ENCODE measurements at regions of chrX and their contacts with region 1.

Region 1: DNA sequence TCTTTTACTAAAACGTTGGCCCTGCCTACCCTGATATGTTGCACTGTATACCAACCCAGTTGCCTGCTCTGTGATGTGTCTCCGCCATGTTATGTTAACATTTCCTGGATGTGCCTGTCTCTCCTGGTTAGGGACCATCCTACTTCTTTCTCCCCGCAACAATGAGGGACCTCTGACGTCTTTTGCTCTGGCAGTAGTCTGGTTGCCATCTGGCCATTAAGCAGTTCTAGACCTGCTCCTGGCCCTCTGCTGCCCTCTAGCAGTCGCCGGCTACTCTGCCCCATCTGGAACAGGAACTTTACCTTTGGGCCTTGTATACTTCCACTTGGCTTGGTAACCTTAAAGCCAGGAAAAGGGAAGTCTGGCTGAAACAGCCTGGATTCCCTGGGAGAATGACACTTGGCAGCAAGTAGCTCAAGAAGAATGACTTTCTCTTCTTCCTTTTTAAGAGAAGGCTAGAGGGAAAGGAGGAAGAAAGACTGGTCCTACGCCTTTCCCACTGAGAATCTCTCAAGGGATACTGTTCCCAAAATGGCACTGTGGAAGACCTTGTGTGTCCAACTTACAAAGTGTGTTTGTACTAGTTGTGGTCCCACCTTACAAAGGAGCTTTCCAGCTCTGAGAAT is 63.5 kb downstream of the GPC3 start:
- DNase-seq: peak; percentile 62
- ATAC-seq: peak; percentile 56
- H3K4me3 Mint-ChIP-seq: no peak overlapping the region
- H3K27ac Mint-ChIP-seq: no peak overlapping the region
- H3K4me1 Mint-ChIP-seq: peaks cover 18% of the 10 kb centered on the region
- H3K27me3 Mint-ChIP-seq: no peaks in the 10 kb centered on the region

Region 2: DNA sequence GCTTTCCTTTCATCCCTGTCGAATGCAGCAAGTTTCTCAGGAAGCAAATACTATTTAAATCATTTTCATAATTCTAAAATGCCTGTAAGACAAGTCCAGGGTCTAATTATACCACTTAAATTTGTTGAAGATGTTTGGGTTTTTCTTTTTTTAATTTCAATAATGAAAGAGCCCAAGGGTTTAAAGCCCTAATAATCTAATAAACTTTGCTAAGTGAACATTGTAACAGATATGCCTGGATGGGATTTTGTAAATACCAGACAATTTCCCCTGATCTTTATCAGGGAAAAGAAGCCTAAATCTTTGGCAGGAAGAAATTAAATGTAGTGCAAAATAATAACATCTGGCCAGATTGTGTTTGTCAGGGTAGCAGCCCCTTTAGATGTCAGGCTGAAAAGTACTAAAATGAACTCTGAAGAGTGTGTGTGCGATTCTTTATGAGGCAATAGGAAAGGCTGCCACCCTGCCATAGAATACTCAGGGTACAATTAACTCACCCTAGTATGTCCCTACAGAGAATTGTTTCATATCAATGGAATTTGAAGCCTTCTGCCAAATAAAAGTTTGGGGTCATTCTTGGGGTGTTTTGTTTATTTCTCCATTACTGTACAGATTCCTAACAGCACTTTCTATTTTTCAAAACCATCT is 17.9 kb after region 1 on chrX:
- CTCF ChIA-PET with region 1: no interaction called
- POLR2A ChIA-PET with region 1: no interaction called
- intact Hi-C with region 1: no loop called
- DNase-seq: no peak
- ATAC-seq: no peak
- H3K4me3 Mint-ChIP-seq: no peak overlapping the region
- H3K27ac Mint-ChIP-seq: no peak overlapping the region
- H3K4me1 Mint-ChIP-seq: no peaks in the 10 kb centered on the region
- H3K27me3 Mint-ChIP-seq: no peaks in the 10 kb centered on the region

Region 3: GRCh38 chrX:133985164-133985966 is 63.5 kb after region 1 on chrX and contains the start of gene GPC3:
- CTCF ChIA-PET with region 1: no interaction called
- POLR2A ChIA-PET with region 1: no interaction called
- intact Hi-C with region 1: loop called in 1 of 2 experiments (anchors 2 kb)
- DNase-seq: peak; percentile 58
- ATAC-seq: peak; percentile 84
- H3K4me3 Mint-ChIP-seq: peak within 1 kb of the TSS; percentile 57
- H3K27ac Mint-ChIP-seq: no peak within 1 kb of the TSS
- H3K4me1 Mint-ChIP-seq: peaks cover 2% of the 10 kb centered on the region
- H3K27me3 Mint-ChIP-seq: peaks cover 24% of the 10 kb centered on the region
- total RNA-seq, gene GPC3: 0.86 to 1.3 TPM

Region 4: GRCh38 chrX:134000260-134001245 is 78.7 kb after region 1 on chrX:
- CTCF ChIA-PET with region 1: no interaction called
- POLR2A ChIA-PET with region 1: no interaction called
- intact Hi-C with region 1: no loop called
- DNase-seq: no peak
- ATAC-seq: no peak
- H3K4me3 Mint-ChIP-seq: no peak overlapping the region
- H3K27ac Mint-ChIP-seq: no peak overlapping the region
- H3K4me1 Mint-ChIP-seq: peaks cover 3% of the 10 kb centered on the region
- H3K27me3 Mint-ChIP-seq: peaks cover 2% of the 10 kb centered on the region

Region 5: GRCh38 chrX:134013092-134013497 is 91.2 kb after region 1 on chrX:
- CTCF ChIA-PET with region 1: no interaction called
- POLR2A ChIA-PET with region 1: no interaction called
- intact Hi-C with region 1: loop called in 1 of 2 experiments (anchors 2 kb)
- DNase-seq: peak; percentile 6
- ATAC-seq: peak; percentile 95
- H3K4me3 Mint-ChIP-seq: no peak overlapping the region
- H3K27ac Mint-ChIP-seq: no peak overlapping the region
- H3K4me1 Mint-ChIP-seq: peaks cover 14% of the 10 kb centered on the region
- H3K27me3 Mint-ChIP-seq: peaks cover 2% of the 10 kb centered on the region

Region 6: DNA sequence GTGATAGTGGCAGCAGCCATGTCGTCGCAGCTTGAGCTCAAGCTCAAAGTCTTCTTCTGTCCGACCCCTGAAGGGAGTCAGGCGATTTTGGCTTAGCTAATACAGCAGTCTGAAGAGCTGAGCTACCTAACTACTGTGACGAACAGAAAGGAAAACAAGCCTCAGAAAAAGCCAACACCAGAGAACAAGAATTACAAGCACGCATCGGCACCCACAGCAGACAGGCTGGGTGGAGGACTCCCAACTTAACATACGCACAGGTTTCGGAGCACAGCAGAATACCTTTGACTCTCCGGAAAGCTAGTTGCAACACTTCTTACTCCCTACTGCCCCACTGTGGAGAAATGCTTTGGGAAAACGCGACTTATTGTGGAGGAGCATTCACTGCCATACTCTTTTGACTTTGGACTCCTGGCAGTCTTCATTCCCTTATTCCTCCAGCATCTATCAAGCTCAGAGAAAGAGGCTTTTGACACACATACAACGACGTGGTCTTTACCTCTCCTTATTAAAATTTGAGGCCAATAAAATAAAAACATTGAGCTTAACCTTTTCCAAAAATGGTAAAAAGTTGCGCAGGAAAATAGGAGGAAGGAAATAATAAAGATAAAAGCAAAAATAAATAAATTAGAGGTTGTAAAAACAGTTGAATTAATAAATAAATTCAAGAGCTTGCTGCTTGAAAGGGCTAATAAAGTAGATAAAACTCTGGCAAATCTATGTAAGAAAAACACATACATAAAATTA is 104.9 kb after region 1 on chrX:
- CTCF ChIA-PET with region 1: interaction called, 4 read pairs
- POLR2A ChIA-PET with region 1: no interaction called
- intact Hi-C with region 1: loop called in 1 of 2 experiments (anchors 5 kb)
- DNase-seq: peak; percentile 57
- ATAC-seq: peak; percentile 66
- H3K4me3 Mint-ChIP-seq: no peak overlapping the region
- H3K27ac Mint-ChIP-seq: no peak overlapping the region
- H3K4me1 Mint-ChIP-seq: peaks cover 5% of the 10 kb centered on the region
- H3K27me3 Mint-ChIP-seq: peaks cover 2% of the 10 kb centered on the region

Measured in activated CD4-positive, alpha-beta T cell treated with anti-CD3 and anti-CD28 coated beads for 36 hours (primary cell).